Sigmoid colon (tissue), 7 donors: ENCODE measurements at regions of chr20 and their contacts with region 1.

Region 1: DNA sequence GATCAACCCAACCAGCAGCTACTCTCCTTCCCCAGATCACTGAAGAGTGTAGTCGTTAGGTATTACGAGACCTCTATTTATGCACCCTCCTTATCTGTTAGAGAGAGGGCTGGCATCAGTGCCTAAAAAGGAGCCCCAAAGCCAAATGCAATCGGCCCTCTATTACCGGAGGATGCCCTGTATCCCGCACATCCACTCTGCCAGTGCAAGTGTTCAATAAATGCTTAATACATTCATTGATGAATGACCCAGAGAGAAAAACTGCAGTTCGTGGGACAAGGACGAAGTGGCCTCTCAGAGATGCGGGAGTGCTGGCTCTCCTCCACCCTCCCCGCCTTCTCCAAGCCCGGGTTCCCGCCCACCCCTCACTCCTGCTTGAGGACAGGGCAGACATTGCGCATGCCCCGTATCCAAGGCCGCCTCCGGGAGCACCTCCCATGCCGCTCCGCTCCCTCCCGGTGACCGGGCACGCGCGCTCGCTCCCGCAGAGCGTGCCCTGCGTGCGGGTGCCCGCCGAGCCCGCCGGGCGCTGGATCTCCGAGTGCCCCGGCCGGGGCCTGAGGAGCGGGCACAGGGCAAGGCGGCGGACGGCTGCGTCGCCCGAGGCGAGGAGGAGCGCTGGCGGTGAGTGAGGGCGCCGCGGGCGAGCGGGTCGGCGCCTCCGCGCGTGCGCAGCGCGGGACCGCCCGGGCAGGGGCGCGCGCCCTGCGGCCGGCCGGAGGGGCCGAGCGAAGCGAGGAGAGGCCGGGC is 27.2 kb upstream of the BTBD3 start:
- DNase-seq: peak; percentile 92
- H3K4me3 ChIP-seq: peak overlapping the region; percentile 69 to 94 (median 89)
- H3K27ac ChIP-seq: peak overlapping the region; percentile 89 to 96 (median 93)
- H3K4me1 ChIP-seq: peaks cover 0 to 20% (median 11%) of the 10 kb centered on the region in 4 donors
- H3K27me3 ChIP-seq: no peaks in the 10 kb centered on the region
- CTCF ChIP-seq: no peak
- EP300 ChIP-seq: no peak
- POLR2A ChIP-seq: no peak

Region 2: DNA sequence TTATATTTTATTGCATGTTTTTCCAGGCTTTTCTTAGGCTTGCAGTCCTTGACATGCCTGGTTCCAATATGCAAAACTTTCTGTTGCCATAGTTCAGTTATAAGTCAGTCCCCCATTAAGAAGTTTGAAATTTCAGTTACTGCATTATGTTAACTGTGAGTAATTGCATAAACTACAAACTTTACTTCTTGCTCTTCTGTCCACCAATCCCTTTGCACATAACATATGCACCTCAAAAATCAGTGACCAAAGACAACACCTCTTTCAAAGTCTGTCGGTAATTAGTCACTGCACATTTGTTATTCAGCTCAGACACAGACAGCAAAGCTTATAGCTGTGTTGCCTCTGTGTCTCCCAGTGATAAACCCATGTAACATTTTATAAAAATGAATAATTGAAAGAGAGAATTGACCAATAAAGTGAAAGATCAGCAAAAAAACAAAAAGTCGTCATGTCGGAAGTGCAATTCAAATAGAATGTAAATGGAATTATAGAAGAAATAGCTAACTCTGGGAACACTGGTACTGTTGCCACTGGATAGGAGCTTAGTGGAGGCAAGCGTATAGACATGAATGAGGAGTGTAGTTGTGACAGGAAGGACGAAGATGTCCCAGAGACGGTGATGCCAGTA is 23.1 kb before region 1 on chr20:
- intact Hi-C with region 1: no loop called
- DNase-seq: no peak
- H3K4me3 ChIP-seq: no peak overlapping the region
- H3K27ac ChIP-seq: no peak overlapping the region
- H3K4me1 ChIP-seq: no peaks in the 10 kb centered on the region
- H3K27me3 ChIP-seq: no peaks in the 10 kb centered on the region
- CTCF ChIP-seq: no peak
- EP300 ChIP-seq: no peak
- POLR2A ChIP-seq: no peak

Region 3: DNA sequence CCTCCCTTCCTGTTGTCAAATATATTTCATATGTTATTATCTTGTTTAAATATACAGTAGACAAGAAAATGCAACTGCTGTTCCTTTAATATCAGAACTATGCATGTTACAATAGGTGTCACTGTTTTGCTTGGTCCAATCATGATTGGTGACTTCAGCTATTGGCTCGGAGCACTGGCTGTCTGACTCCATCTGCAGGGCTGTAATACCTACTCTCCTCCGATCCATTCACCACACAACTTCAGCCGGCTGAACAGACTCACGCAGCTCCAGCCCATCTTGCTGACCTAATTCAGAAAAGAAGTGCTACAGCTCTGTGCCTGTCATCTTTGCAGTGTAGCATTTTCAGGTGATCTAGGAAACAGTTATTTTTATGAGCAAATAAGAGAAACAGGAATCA is 27.2 kb after region 1 on chr20 and contains the start of gene BTBD3:
- intact Hi-C with region 1: loop called (anchors 1 kb)
- DNase-seq: peak; percentile 80
- H3K4me3 ChIP-seq: peak within 1 kb of the TSS; percentile 5 to 36 (median 26)
- H3K27ac ChIP-seq: peak within 1 kb of the TSS; percentile 12 to 62 (median 34)
- H3K4me1 ChIP-seq: peaks cover 0 to 33% (median 14%) of the 10 kb centered on the region in 4 donors
- H3K27me3 ChIP-seq: no peaks in the 10 kb centered on the region
- CTCF ChIP-seq: no peak
- EP300 ChIP-seq: no peak
- POLR2A ChIP-seq: peak; percentile 43 to 49
- total RNA-seq, gene BTBD3: 26.8 to 47.6 (median 31.6) TPM